MCF 10A (cell line): ENCODE measurements at regions of chr13 and their contacts with region 1.

Region 1: GRCh38 chr13:32669030-32669646 is 82.9 kb downstream of the PDS5B start:
- DNase-seq: peak; percentile 55
- H3K4me3 Mint-ChIP-seq: no peak overlapping the region
- H3K27ac Mint-ChIP-seq: no peak overlapping the region
- H3K4me1 Mint-ChIP-seq: no peaks in the 10 kb centered on the region
- H3K27me3 Mint-ChIP-seq: no peaks in the 10 kb centered on the region
- CTCF ChIP-seq: peak; percentile 56

Region 2: DNA sequence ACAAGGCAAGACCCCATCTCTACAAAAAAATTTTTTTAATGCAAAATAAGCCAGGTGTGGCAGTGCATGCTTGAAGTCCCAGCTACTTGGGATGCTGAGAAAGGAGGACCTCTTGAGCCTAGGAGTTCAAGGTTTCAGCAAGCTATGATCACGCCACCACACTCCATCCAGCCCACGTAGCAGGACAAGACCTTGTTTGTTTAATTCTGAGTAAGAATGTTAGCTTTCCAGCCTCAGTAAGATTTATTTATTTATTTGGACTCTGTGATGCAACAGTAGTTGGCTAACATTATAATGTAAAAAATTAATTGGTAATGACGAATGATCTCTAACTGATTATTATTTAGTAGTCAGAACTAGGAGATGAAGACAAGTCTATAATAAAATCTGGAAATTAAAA is 153.9 kb before region 1 on chr13:
- CTCF ChIA-PET with region 1: no interaction called
- POLR2A ChIA-PET with region 1: no interaction called
- intact Hi-C with region 1: no loop called
- DNase-seq: no peak
- H3K4me3 Mint-ChIP-seq: no peak overlapping the region
- H3K27ac Mint-ChIP-seq: no peak overlapping the region
- H3K4me1 Mint-ChIP-seq: peaks cover 5% of the 10 kb centered on the region
- H3K27me3 Mint-ChIP-seq: no peaks in the 10 kb centered on the region
- CTCF ChIP-seq: no peak

Region 3: GRCh38 chr13:32720026-32720425 is 50.9 kb after region 1 on chr13:
- CTCF ChIA-PET with region 1: no interaction called
- POLR2A ChIA-PET with region 1: no interaction called
- intact Hi-C with region 1: no loop called
- DNase-seq: peak; percentile 5
- H3K4me3 Mint-ChIP-seq: no peak overlapping the region
- H3K27ac Mint-ChIP-seq: no peak overlapping the region
- H3K4me1 Mint-ChIP-seq: no peaks in the 10 kb centered on the region
- H3K27me3 Mint-ChIP-seq: no peaks in the 10 kb centered on the region
- CTCF ChIP-seq: no peak

Region 4: DNA sequence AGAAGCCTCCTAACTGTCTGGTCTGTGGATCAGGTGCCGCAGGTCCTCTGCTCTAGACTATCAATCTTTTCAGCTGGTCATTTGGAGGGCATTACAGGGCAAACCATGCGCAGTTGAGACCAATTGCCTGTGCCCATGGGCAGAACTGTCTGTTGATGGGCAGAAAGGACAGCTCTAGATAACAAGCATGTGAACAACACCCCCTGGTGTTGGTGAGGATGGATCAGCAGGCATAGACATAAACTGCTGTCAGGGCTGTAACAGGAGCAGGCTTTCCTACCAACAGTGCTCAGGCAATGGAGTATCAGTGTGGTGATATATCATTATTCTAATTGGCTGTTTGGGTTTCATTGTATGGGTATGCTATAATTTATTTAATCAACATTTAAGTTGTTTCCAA is 242.4 kb after region 1 on chr13:
- CTCF ChIA-PET with region 1: no interaction called
- POLR2A ChIA-PET with region 1: no interaction called
- intact Hi-C with region 1: loop called (anchors 2 kb)
- DNase-seq: peak; percentile 72
- H3K4me3 Mint-ChIP-seq: no peak overlapping the region
- H3K27ac Mint-ChIP-seq: no peak overlapping the region
- H3K4me1 Mint-ChIP-seq: no peaks in the 10 kb centered on the region
- H3K27me3 Mint-ChIP-seq: no peaks in the 10 kb centered on the region
- CTCF ChIP-seq: peak; percentile 29

Region 5: GRCh38 chr13:33285420-33286124 is 616.4 kb after region 1 on chr13 and contains the start of gene STARD13:
- CTCF ChIA-PET with region 1: no interaction called
- POLR2A ChIA-PET with region 1: no interaction called
- intact Hi-C with region 1: no loop called
- DNase-seq: peak; percentile 97
- H3K4me3 Mint-ChIP-seq: peak within 1 kb of the TSS; percentile 91
- H3K27ac Mint-ChIP-seq: peak within 1 kb of the TSS; percentile 95
- H3K4me1 Mint-ChIP-seq: peaks cover 30% of the 10 kb centered on the region
- H3K27me3 Mint-ChIP-seq: no peaks in the 10 kb centered on the region
- CTCF ChIP-seq: peak; percentile 12
- total RNA-seq, gene STARD13: 26.3 and 31.9 TPM in 2 replicates